GM10248 (cell line): ENCODE measurements at regions of chr17 and their contacts with region 1.

Region 1: DNA sequence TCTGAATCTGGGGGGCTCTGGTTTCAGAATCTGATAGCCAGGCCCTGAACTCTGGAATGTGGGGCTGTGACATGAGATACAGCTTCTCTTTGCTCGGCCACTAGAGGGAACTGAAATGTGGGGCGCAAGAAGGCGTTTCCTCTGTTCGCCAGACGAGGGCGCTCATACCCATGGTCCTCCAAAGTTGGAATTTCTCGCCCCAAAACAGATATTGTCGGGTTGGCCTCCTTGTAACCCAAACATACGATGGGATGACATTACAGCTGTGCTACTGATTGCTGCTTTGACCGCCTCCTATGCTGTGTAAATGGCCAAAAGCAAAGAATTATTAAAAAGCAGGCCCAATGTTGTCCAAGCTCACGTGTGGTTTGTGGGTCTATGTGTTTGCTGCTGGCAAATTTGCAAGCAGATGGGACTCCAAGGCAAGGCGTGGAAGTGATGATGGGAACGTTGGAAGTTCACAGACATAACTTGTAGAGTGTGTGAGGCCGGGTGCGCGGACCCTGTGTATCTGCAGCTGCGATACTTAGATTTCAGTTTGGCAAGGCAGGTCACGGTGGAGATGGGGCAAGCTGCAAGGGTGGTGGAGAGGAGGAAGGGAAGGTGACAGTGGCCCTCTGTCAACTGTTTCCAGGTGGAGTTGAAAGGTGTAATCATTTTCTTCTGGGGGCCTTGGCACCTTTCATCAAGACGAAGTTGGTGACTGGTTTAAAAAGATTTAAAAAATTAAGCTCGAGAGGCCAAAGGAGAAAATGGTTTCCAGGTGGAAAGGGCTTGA is 13.0 kb upstream of the MSI2 start:
- DNase-seq: peak; percentile 82
- CTCF ChIP-seq: peak; percentile 100

Region 2: GRCh38 chr17:57080441-57081080 is 162.8 kb before region 1 on chr17:
- CTCF ChIA-PET with region 1: no interaction called
- POLR2A ChIA-PET with region 1: no interaction called
- DNase-seq: peak; percentile 41
- CTCF ChIP-seq: no peak

Region 3: DNA sequence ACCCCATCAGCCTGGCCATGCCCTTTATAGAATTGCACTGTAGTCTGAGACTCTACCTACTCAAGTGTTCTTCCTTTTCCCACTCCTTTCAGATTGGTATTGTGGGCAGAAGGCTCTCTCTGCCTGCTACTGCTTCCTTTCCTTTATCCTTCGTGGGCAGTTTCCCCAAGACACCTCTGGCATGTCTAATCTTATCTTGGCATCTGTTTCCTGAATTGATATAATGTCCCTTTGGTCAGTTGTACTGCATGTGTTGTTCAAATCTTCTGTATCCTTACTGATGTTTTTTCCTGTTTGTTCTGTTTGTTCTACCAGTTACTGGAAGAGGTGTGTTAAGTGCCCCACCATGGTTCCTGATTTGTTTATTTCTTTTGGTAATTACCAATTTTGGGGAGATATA is 16.6 kb before region 1 on chr17:
- CTCF ChIA-PET with region 1: interaction called, 16 read pairs
- POLR2A ChIA-PET with region 1: no interaction called
- DNase-seq: no peak
- CTCF ChIP-seq: no peak

Region 4: GRCh38 chr17:57284984-57285646 is 41.8 kb after region 1 on chr17:
- CTCF ChIA-PET with region 1: interaction called, 12 read pairs
- POLR2A ChIA-PET with region 1: no interaction called
- DNase-seq: peak; percentile 61
- CTCF ChIP-seq: no peak

Region 5: GRCh38 chr17:57375770-57376193 is 132.4 kb after region 1 on chr17:
- CTCF ChIA-PET with region 1: no interaction called
- POLR2A ChIA-PET with region 1: no interaction called
- DNase-seq: no peak
- CTCF ChIP-seq: no peak

Region 6: GRCh38 chr17:57415751-57416207 is 172.4 kb after region 1 on chr17:
- CTCF ChIA-PET with region 1: interaction called, 11 read pairs
- POLR2A ChIA-PET with region 1: no interaction called
- DNase-seq: no peak
- CTCF ChIP-seq: no peak

Region 7: DNA sequence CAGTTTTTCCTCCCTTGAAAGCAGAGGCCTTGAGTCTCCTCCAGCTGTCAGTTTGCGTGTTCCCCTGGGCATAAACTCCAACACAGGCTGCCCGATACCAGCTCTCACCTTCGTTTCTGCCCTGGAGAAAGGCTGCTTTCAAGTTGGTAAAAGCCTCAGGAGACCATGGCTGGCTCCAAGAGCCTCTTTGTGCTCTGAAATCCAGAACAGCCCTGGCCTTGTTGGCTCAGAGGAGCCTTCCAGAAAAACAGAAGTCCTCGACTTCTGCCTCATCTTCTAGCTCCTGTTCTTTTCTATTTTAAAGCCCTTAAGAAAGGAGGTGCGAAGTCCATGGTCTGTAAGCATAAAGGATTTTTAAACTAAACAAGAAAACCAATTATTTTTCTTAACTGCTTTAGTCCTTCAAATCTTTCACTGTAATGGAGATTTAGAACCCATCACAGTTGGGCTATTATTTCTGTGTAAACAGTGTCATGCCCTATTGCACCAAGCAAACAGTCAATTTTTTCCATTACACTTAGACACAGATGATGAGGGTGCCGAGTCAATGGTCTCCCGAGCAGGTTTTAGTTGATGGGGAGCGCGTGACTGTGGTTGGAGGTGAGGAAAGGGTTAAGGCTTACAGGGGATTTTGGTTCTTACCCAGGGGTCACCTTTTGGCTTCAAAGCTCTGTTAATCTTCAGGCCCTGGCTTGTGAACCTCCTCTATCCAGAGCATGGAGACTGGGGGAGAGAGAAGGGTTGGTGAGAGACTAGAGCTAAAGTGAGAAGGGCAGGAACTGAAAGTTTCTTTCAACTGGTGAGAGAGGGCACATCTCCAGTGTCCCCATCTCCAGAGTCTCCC is 225.8 kb after region 1 on chr17:
- CTCF ChIA-PET with region 1: interaction called, 11 read pairs
- POLR2A ChIA-PET with region 1: no interaction called
- DNase-seq: peak; percentile 65
- CTCF ChIP-seq: no peak

Region 8: DNA sequence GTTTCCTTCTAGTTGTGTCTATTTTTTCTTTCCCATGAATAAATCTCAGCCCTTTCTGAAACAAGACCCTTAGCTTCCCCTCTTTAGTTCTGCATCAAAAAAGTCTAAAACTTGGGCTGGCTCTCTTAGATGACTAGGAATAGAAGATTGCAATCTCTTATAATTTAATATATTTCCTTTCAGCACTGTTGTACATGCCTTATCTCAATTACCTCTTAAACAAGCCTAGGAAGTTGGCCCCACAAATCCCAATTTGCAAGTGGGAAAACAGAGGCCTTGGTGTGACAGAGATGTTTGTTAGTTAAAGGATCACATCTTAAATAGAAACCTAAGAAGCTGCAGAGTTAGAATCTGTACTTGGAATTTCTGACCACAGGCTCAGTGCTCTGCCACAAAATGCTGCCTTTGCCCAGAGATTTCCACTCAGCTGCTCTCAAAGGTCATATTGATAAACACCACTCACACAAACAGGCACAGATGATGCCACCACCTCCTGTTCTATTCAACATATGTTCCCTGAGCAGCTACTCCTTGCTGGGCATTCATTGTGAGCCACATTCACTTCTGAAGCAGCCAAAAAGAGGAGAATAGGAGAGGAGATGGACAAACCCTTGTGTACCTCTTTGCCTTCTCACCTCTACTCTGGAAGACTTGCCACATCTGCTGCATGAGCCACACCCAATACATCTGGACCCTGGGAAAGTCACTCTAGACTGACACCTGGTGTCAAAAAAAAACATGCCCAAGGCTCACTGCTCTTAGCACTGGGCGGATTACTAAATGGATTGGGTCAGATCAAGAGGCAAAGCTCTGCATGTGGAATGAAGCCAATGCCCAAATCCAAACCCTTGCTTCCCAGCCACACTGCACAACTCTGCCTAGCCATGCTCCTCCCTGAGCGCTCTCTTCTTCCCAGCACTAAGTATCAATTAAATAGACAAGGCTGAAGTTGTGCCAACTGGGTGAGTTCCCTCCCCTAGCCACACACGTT is 496.3 kb after region 1 on chr17:
- CTCF ChIA-PET with region 1: interaction called, 52 read pairs
- POLR2A ChIA-PET with region 1: no interaction called
- DNase-seq: peak; percentile 51
- CTCF ChIP-seq: peak; percentile 49